ENCODE measurements at regions of chr7 and their contacts with region 1.

Region 1: GRCh38 chr7:81339946-81340345 is 421.1 kb upstream of the SEMA3C start:
- DNase-seq: no peak
- ATAC-seq: no peak
- H3K4me3 ChIP-seq: no peak overlapping the region
- H3K27ac ChIP-seq: no peak overlapping the region
- H3K4me1 ChIP-seq: no peaks in the 10 kb centered on the region
- H3K27me3 ChIP-seq: no peaks in the 10 kb centered on the region
- CTCF ChIP-seq: no peak

Region 2: GRCh38 chr7:81321949-81322348 is 18.0 kb before region 1 on chr7:
- CTCF ChIA-PET with region 1: no interaction called
- POLR2A ChIA-PET with region 1: no interaction called
- intact Hi-C with region 1: no loop called
- DNase-seq: no peak
- ATAC-seq: no peak
- H3K4me3 ChIP-seq: no peak overlapping the region
- H3K27ac ChIP-seq: no peak overlapping the region
- H3K4me1 ChIP-seq: no peaks in the 10 kb centered on the region
- H3K27me3 ChIP-seq: no peaks in the 10 kb centered on the region
- CTCF ChIP-seq: no peak

Region 3: DNA sequence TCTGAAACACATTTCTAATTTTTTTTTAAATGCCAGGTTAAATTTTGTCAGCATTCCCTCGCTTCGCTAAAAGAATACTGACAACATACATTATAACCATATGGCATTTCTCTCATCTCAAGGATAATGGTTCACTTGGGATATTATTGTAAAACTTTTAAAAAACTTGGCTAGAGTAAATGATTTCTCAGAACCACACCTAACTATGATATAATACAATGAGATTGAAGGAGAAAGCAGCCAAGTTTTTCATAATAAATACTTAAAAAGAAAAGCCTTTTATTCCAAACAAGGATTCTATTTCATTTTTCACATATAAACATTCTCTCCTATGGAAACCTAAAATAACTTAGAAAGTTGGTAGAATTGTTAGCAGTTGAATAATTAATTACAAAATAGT is 16.0 kb after region 1 on chr7:
- CTCF ChIA-PET with region 1: no interaction called
- POLR2A ChIA-PET with region 1: interaction called, 27 read pairs
- intact Hi-C with region 1: no loop called
- DNase-seq: no peak
- ATAC-seq: no peak
- H3K4me3 ChIP-seq: no peak overlapping the region
- H3K27ac ChIP-seq: no peak overlapping the region
- H3K4me1 ChIP-seq: no peaks in the 10 kb centered on the region
- H3K27me3 ChIP-seq: no peaks in the 10 kb centered on the region
- CTCF ChIP-seq: no peak

Region 4: GRCh38 chr7:81367335-81367931 is 27.5 kb after region 1 on chr7:
- CTCF ChIA-PET with region 1: no interaction called
- POLR2A ChIA-PET with region 1: no interaction called
- intact Hi-C with region 1: no loop called
- DNase-seq: no peak
- ATAC-seq: no peak
- H3K4me3 ChIP-seq: no peak overlapping the region
- H3K27ac ChIP-seq: no peak overlapping the region
- H3K4me1 ChIP-seq: no peaks in the 10 kb centered on the region
- H3K27me3 ChIP-seq: no peaks in the 10 kb centered on the region
- CTCF ChIP-seq: no peak

Region 5: GRCh38 chr7:81383848-81384247 is 43.9 kb after region 1 on chr7:
- CTCF ChIA-PET with region 1: no interaction called
- POLR2A ChIA-PET with region 1: no interaction called
- intact Hi-C with region 1: no loop called
- DNase-seq: no peak
- ATAC-seq: no peak
- H3K4me3 ChIP-seq: no peak overlapping the region
- H3K27ac ChIP-seq: no peak overlapping the region
- H3K4me1 ChIP-seq: no peaks in the 10 kb centered on the region
- H3K27me3 ChIP-seq: no peaks in the 10 kb centered on the region
- CTCF ChIP-seq: no peak

Measured in PC-3 (cell line).